OCI-LY7 (cell line): ENCODE measurements at regions of chr18 and their contacts with region 1.

Region 1: DNA sequence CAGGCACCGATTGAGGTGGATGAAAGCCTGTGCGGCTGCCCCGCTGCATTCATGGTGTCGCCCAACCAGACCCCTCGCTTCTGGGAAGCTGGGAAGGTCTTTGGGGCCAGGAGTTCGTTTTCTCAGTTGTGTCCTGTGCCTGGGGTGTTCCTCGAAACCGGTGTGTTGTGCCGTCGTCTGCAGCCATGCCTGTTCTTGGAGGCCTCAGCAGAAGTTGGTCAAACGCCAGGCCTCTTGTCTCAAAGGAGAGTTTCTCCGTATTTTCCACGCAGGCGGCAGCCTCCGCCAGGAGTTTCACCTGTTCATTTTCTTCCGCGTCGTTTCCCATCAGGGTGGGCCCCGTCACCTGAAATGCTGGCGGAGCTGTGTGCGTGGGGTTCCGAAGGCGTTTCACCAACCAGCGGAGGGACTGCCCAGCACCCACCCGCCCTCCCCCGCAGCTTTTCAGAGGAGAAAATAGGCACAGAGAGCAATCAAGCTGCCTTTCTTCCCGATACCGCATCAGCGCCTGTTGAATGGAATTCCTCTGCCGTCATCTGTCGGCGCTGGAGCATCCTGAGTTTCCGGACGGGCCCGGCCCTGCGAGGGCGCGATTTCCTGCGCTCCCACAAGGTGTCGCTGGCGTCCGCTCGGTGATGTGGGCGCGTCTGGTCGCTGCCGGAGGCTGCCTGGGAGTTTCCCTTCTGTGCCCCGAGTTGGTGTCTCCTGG is 17.0 kb upstream of the NFATC1 start:
- DNase-seq: peak; percentile 53
- H3K4me3 ChIP-seq: no peak overlapping the region
- H3K27ac ChIP-seq: no peak overlapping the region
- H3K4me1 ChIP-seq: peaks cover 8% of the 10 kb centered on the region
- CTCF ChIP-seq: peak; percentile 76

Region 2: GRCh38 chr18:79644006-79644665 is 265.4 kb after region 1 on chr18:
- CTCF ChIA-PET with region 1: no interaction called
- POLR2A ChIA-PET with region 1: no interaction called
- intact Hi-C with region 1: loop called (anchors 1 kb)
- DNase-seq: peak; percentile 70
- H3K4me3 ChIP-seq: peak overlapping the region; percentile 50
- H3K27ac ChIP-seq: no peak overlapping the region
- H3K4me1 ChIP-seq: peaks cover 19% of the 10 kb centered on the region
- CTCF ChIP-seq: peak; percentile 83

Region 3: DNA sequence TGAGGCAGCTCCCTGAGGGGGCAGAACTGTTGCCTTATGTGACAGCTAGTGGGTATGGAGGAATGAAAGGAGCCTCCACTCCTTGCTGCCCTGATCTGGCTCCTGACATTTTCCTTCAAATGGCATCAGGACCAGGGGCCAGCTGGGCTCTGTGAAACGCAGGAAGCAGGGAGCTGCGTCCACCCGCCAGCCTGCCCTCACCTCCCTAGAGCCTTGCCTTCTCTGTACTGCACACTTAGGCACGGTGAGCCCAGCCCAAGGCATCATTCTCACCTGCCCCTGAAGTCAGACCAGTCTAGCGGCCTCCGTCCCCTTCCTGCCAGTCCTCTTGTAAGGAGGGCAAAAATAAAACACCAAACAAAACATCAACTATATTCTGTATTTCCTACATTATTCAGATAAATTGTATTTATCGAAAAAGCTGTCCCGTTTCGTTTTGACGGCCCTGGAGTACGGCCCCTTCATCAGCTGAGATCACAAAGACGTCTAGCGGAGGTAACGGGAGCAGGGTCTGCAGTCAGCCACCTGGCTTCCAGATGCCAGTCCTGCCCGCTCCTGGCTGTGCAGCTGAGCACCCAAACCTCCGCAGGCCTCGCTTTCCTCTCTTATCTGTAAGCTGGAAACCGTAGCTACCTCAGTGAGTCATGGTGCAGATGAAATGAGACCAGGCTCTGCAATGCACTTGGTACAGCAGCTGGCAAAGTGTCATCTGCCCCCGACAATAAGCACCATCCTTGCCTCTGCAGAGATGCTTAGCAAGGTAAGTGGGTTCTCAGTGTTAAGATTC is 294.0 kb after region 1 on chr18:
- CTCF ChIA-PET with region 1: no interaction called
- POLR2A ChIA-PET with region 1: no interaction called
- intact Hi-C with region 1: no loop called
- DNase-seq: no peak
- H3K4me3 ChIP-seq: no peak overlapping the region
- H3K27ac ChIP-seq: no peak overlapping the region
- H3K4me1 ChIP-seq: peaks cover 9% of the 10 kb centered on the region
- CTCF ChIP-seq: no peak